ENCODE measurements at regions of chr14 and their contacts with region 1.

Region 1: GRCh38 chr14:81453166-81453766 is 53.1 kb upstream of the STON2 start:
- DNase-seq: peak; percentile 65
- ATAC-seq: peak; percentile 86
- H3K4me3 Mint-ChIP-seq: no peak overlapping the region
- H3K27ac Mint-ChIP-seq: no peak overlapping the region
- H3K4me1 Mint-ChIP-seq: peaks cover 10% of the 10 kb centered on the region
- H3K27me3 Mint-ChIP-seq: no peaks in the 10 kb centered on the region
- CTCF ChIP-seq: peak; percentile 77

Region 2: GRCh38 chr14:81187832-81188522 is 265.3 kb before region 1 on chr14:
- CTCF ChIA-PET with region 1: no interaction called
- POLR2A ChIA-PET with region 1: no interaction called
- intact Hi-C with region 1: no loop called
- DNase-seq: no peak
- ATAC-seq: peak; percentile 60
- H3K4me3 Mint-ChIP-seq: no peak overlapping the region
- H3K27ac Mint-ChIP-seq: peak overlapping the region; percentile 20
- H3K4me1 Mint-ChIP-seq: peaks cover 44% of the 10 kb centered on the region
- H3K27me3 Mint-ChIP-seq: no peaks in the 10 kb centered on the region
- CTCF ChIP-seq: no peak

Region 3: GRCh38 chr14:81269100-81269978 is 183.9 kb before region 1 on chr14:
- CTCF ChIA-PET with region 1: interaction called, 82 read pairs
- POLR2A ChIA-PET with region 1: interaction called, 3 read pairs
- intact Hi-C with region 1: loop called (anchors 1 kb)
- DNase-seq: peak; percentile 28
- ATAC-seq: peak; percentile 68
- H3K4me3 Mint-ChIP-seq: no peak overlapping the region
- H3K27ac Mint-ChIP-seq: no peak overlapping the region
- H3K4me1 Mint-ChIP-seq: no peaks in the 10 kb centered on the region
- H3K27me3 Mint-ChIP-seq: peaks cover 20% of the 10 kb centered on the region
- CTCF ChIP-seq: peak; percentile 85

Region 4: GRCh38 chr14:81441626-81442134 is 11.6 kb before region 1 on chr14:
- CTCF ChIA-PET with region 1: interaction called, 14 read pairs
- POLR2A ChIA-PET with region 1: no interaction called
- intact Hi-C with region 1: no loop called
- DNase-seq: no peak
- ATAC-seq: no peak
- H3K4me3 Mint-ChIP-seq: no peak overlapping the region
- H3K27ac Mint-ChIP-seq: no peak overlapping the region
- H3K4me1 Mint-ChIP-seq: peaks cover 6% of the 10 kb centered on the region
- H3K27me3 Mint-ChIP-seq: peaks cover 44% of the 10 kb centered on the region
- CTCF ChIP-seq: no peak

Region 5: GRCh38 chr14:81464247-81465002 is 11.2 kb after region 1 on chr14:
- CTCF ChIA-PET with region 1: interaction called, 50 read pairs
- POLR2A ChIA-PET with region 1: interaction called, 3 read pairs
- intact Hi-C with region 1: no loop called
- DNase-seq: peak; percentile 70
- ATAC-seq: peak; percentile 78
- H3K4me3 Mint-ChIP-seq: peak overlapping the region; percentile 77
- H3K27ac Mint-ChIP-seq: peak overlapping the region; percentile 85
- H3K4me1 Mint-ChIP-seq: peaks cover 6% of the 10 kb centered on the region
- H3K27me3 Mint-ChIP-seq: no peaks in the 10 kb centered on the region
- CTCF ChIP-seq: peak; percentile 81

Measured in activated CD8-positive, alpha-beta T cell treated with anti-CD3 and anti-CD28 coated beads for 36 hours (primary cell).